ENCODE measurements at regions of chr5 and their contacts with region 1.

Region 1: GRCh38 chr5:147887024-147887627 is 8.6 kb downstream of the SCGB3A2 start:
- DNase-seq: no peak
- H3K4me3 ChIP-seq: no peak overlapping the region
- H3K27ac ChIP-seq: no peak overlapping the region
- H3K4me1 ChIP-seq: peaks cover 0 to 11% of the 10 kb centered on the region in 2 donors
- H3K27me3 ChIP-seq: no peaks in the 10 kb centered on the region
- CTCF ChIP-seq: peak; percentile 11 to 66 (median 52)

Region 2: GRCh38 chr5:147857302-147858129 is 29.6 kb before region 1 on chr5:
- intact Hi-C with region 1: loop called (anchors 2 kb)
- DNase-seq: peak in 1 of 2 donors; percentile 86
- H3K4me3 ChIP-seq: no peak overlapping the region
- H3K27ac ChIP-seq: no peak overlapping the region
- H3K4me1 ChIP-seq: peaks cover 0 to 3% of the 10 kb centered on the region in 2 donors
- H3K27me3 ChIP-seq: no peaks in the 10 kb centered on the region
- CTCF ChIP-seq: peak; percentile 41 to 82 (median 76)

Measured in ascending aorta (tissue), 2 donors.